Calu3 (cell line): ENCODE measurements at regions of chr3 and their contacts with region 1.

Region 1: DNA sequence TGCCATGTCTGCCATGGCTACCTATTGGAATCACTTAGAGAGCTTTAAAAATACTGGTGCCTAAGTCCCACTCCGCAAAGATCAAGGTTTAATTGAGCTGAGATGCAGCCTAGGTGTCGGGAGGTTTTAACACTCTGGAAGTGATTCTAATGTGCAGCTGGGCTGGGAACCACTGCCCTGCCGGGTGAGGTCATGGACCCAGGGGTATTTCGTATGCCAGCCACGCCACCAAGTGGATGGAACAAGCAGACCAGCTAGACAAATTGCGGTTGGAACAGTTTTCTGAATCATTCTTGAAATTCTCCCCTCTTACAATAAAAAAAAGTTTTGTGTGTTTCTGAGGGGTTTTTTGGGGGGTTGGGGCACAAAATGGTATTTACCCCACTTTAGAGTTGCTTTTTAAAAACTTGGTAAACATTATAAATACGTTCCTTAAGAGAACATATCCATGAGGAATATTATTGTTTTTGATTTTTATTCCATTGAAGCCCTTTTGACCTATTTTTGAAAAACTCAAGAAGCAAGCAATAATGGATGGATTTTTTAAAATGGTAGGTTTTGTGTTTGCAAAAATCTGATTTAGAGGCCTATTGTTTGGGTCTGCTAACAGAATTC is 66.2 kb upstream of the CSTA start:
- DNase-seq: peak; percentile 79
- H3K4me3 Mint-ChIP-seq: no peak overlapping the region
- H3K27ac Mint-ChIP-seq: no peak overlapping the region
- H3K4me1 Mint-ChIP-seq: no peaks in the 10 kb centered on the region
- H3K27me3 Mint-ChIP-seq: no peaks in the 10 kb centered on the region
- CTCF ChIP-seq: peak; percentile 60

Region 2: GRCh38 chr3:121995161-121996137 is 263.4 kb before region 1 on chr3:
- CTCF ChIA-PET with region 1: interaction called, 3 read pairs
- intact Hi-C with region 1: loop called (anchors 10 kb)
- DNase-seq: peak; percentile 82
- H3K4me3 Mint-ChIP-seq: no peak overlapping the region
- H3K27ac Mint-ChIP-seq: peak overlapping the region; percentile 89
- H3K4me1 Mint-ChIP-seq: peaks cover 37% of the 10 kb centered on the region
- H3K27me3 Mint-ChIP-seq: no peaks in the 10 kb centered on the region
- CTCF ChIP-seq: peak; percentile 54

Region 3: GRCh38 chr3:122356415-122356814 is 97.6 kb after region 1 on chr3:
- CTCF ChIA-PET with region 1: no interaction called
- intact Hi-C with region 1: loop called (anchors 10 kb)
- DNase-seq: peak; percentile 66
- H3K4me3 Mint-ChIP-seq: no peak overlapping the region
- H3K27ac Mint-ChIP-seq: no peak overlapping the region
- H3K4me1 Mint-ChIP-seq: no peaks in the 10 kb centered on the region
- H3K27me3 Mint-ChIP-seq: no peaks in the 10 kb centered on the region
- CTCF ChIP-seq: peak; percentile 27